Activated T-helper 2 cell treated with anti-CD3 and anti-CD28 coated beads, Interferon-gamma antibody, Interleukin-2, Interleukin-4, amounts not matched to agents 10 μg/mL and 5 μg/mL and 100 μg/mL, durations not matched to agents 14 hours and 24 hours and 36 hours (primary cell): ENCODE measurements at regions of chr3 and their contacts with region 1.

Region 1: GRCh38 chr3:141105828-141106628 is 54.9 kb downstream of the SPSB4 start:
- DNase-seq: peak; percentile 27
- H3K4me3 Mint-ChIP-seq: no peak overlapping the region
- H3K27ac Mint-ChIP-seq: no peak overlapping the region
- H3K4me1 Mint-ChIP-seq: no peaks in the 10 kb centered on the region
- H3K27me3 Mint-ChIP-seq: no peaks in the 10 kb centered on the region

Region 2: DNA sequence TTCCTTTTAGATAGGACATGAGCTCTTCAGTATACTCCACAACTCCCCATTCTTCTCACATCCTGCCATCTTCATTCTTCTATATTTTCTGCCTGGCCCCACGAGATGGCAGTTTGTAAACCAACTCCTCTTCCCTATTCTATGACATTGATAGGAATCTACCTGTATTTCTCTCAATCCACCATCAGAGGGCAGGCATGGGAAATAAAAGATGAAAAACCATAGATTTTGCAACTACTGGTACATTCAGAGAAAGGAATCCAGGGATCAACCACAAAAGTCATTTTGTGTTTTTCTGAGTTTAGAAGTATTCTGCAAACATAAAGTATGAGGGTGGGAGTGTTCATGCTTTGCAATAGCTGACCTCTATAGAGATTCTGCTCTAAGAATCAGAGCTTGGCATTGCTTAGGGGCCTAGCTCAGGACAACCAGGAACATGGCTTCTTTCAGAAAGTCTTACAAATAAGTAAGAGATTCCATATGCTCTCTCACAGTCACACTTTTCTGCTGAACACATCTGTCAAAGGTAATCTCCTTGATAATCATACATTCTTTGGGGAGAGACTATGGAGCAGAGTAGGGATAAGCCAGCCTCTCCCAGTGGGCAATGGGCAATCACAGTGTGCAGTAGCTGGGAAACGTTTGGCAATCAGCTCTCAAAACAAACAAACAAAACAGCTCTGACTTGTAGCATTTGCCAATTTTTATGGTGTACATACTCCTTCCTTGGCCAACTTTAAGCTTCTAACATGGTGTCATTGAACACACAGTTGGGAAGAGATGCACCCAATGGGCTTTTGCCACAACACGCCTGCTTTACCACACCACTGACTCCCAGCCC is 207.5 kb before region 1 on chr3:
- intact Hi-C with region 1: loop called (anchors 5 kb)
- DNase-seq: no peak
- H3K4me3 Mint-ChIP-seq: no peak overlapping the region
- H3K27ac Mint-ChIP-seq: no peak overlapping the region
- H3K4me1 Mint-ChIP-seq: no peaks in the 10 kb centered on the region
- H3K27me3 Mint-ChIP-seq: peaks cover 24% of the 10 kb centered on the region

Region 3: DNA sequence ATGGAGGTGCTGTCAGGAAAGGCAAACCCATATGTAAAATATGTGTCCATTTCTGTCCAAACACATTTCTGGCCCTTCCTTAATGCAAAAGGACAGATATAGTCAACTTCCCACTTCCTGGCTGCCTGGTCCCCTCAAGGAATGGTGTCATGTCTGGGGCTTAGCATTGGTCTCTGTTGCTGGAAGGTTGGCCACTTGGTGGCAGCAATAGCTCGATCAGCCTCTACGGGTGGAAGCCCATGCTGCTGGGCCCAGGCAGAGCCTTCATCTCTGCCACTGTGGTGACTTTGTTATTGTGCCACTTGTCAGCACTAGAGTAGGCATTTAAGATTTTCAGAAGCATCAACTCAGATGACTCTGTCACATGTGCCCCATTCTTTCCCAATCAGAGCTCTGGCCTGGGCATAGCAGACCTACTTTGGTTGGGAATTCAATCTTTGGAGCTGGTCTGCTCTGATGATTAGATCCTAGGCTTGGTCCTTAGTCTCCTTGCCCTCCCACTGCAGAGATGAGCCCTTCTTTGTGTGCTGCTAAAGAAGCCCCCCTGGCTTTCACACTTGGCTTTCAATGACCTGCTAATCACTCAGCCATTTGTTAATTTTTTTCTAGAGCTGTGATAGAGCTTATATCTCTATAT is 105.9 kb before region 1 on chr3:
- intact Hi-C with region 1: loop called (anchors 1 kb)
- DNase-seq: peak; percentile 21
- H3K4me3 Mint-ChIP-seq: no peak overlapping the region
- H3K27ac Mint-ChIP-seq: no peak overlapping the region
- H3K4me1 Mint-ChIP-seq: peaks cover 5% of the 10 kb centered on the region
- H3K27me3 Mint-ChIP-seq: peaks cover 13% of the 10 kb centered on the region

Region 4: DNA sequence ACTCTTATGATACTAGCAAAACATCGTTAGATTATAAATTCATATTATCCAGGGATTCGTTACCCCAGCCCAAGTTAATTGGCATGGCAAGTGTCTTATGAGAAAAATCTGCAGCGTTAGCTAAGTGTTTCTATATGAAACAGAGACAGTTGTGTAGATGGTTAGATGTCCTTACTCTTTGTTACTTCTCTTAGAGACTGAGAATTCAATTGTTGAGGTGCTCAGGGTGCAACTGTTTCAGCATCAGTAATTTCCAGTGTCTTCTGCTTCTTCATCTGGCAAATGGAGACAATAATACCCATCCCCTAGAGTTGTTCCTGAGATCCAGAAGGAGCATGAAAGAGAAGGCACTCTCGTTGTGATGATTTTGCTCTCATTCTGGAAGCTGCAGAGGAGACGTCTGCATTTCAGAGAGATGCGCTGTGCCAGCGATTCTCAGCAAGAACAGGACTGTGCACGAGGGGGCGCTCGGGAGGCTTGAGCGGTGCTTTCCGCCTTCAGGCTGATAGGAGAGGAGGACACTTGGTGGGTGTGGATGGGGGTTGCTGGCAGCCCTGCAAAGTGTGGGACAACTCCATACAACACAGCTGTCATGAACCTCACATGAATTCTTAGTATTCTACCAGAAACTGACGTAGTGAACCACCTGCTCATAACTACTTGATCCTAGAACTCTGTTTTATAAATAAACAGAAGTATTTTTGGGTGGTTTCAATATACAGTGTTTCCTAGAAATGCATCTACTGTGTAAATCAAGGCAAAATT is 94.6 kb before region 1 on chr3:
- intact Hi-C with region 1: loop called (anchors 1 kb)
- DNase-seq: peak; percentile 63
- H3K4me3 Mint-ChIP-seq: no peak overlapping the region
- H3K27ac Mint-ChIP-seq: no peak overlapping the region
- H3K4me1 Mint-ChIP-seq: peaks cover 13% of the 10 kb centered on the region
- H3K27me3 Mint-ChIP-seq: peaks cover 39% of the 10 kb centered on the region

Region 5: GRCh38 chr3:141243271-141243707 is 137.3 kb after region 1 on chr3:
- intact Hi-C with region 1: no loop called
- DNase-seq: peak; percentile 61
- H3K4me3 Mint-ChIP-seq: peak overlapping the region; percentile 32
- H3K27ac Mint-ChIP-seq: peak overlapping the region; percentile 87
- H3K4me1 Mint-ChIP-seq: peaks cover 60% of the 10 kb centered on the region
- H3K27me3 Mint-ChIP-seq: no peaks in the 10 kb centered on the region